Activated T-helper 1 cell treated with anti-CD3 and anti-CD28 coated beads, Interleukin-12 subunit alpha, Interleukin-12 subunit beta, Interleukin-2, Interleukin-4 antibody, amounts not matched to agents 30 ng/mL and 10 ng/mL and 1 ng/mL, durations not matched to agents 14 hours and 24 hours and 36 hours (primary cell): ENCODE measurements at regions of chr4 and their contacts with region 1.

Region 1: GRCh38 chr4:94207469-94208224 is at the start of gene SMARCAD1:
- DNase-seq: peak; percentile 82
- H3K4me3 Mint-ChIP-seq: peak within 1 kb of the TSS; percentile 95
- H3K27ac Mint-ChIP-seq: peak within 1 kb of the TSS; percentile 99
- H3K4me1 Mint-ChIP-seq: peaks cover 28% of the 10 kb centered on the region
- H3K27me3 Mint-ChIP-seq: peaks cover 1% of the 10 kb centered on the region
- total RNA-seq, gene SMARCAD1: 44.0 and 46.3 TPM in 2 replicates

Region 2: DNA sequence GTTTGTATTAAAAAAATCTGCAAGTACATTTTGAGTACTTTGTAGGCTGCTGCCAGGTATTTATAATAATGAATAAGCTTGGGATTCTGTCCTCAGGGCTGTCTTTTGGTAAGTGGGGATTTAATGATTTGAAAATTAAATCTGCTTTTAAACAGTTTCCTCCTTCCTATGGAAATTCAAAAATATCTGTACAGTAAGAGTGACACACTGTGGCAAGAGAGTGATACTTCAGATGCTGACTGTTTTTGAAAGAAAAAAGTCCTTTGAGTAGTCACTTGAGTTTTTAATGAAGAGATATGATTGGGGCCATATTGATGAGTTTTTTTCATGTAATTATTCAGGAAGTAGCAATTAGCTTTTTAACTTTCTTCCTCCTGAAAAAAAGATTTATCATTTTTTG is 49.2 kb after region 1 on chr4:
- intact Hi-C with region 1: no loop called
- DNase-seq: no peak
- H3K4me3 Mint-ChIP-seq: no peak overlapping the region
- H3K27ac Mint-ChIP-seq: no peak overlapping the region
- H3K4me1 Mint-ChIP-seq: no peaks in the 10 kb centered on the region
- H3K27me3 Mint-ChIP-seq: no peaks in the 10 kb centered on the region

Region 3: DNA sequence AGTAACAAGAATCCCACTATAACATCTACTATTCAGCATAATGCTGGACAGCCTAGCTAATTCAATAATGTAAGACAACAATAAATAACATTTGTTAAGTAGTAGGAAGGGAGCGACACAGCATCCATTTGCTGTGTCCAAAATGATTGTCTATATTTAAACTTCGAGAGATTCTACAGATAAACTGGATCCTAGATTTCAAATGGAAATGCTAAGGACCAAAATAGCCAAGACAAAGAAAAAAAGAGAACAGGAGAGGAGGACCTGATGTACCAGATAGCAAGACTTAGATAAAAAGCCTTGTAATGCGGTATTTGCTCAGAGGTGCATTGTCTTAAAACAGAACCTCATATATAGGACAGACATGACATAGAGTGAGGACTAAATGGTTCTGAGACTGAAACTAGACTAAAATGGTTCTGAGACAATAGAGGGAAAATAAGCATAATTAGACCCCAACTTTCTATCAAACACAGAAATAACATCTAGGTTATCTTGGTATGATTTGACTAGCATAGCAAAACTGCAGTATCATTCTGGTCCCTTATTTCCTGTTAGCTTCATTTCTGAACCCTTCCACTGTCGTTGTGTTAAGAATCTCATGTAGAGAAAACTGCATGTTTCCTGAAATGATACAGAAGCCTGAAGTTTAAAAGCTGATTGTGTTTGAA is 131.2 kb after region 1 on chr4:
- intact Hi-C with region 1: loop called (anchors 2 kb)
- DNase-seq: no peak
- H3K4me3 Mint-ChIP-seq: peak overlapping the region; percentile 35
- H3K27ac Mint-ChIP-seq: peak overlapping the region; percentile 85
- H3K4me1 Mint-ChIP-seq: peaks cover 27% of the 10 kb centered on the region
- H3K27me3 Mint-ChIP-seq: peaks cover 3% of the 10 kb centered on the region